Gastrocnemius medialis (tissue), 4 donors: ENCODE measurements at regions of chr21 and their contacts with region 1.

Region 1: DNA sequence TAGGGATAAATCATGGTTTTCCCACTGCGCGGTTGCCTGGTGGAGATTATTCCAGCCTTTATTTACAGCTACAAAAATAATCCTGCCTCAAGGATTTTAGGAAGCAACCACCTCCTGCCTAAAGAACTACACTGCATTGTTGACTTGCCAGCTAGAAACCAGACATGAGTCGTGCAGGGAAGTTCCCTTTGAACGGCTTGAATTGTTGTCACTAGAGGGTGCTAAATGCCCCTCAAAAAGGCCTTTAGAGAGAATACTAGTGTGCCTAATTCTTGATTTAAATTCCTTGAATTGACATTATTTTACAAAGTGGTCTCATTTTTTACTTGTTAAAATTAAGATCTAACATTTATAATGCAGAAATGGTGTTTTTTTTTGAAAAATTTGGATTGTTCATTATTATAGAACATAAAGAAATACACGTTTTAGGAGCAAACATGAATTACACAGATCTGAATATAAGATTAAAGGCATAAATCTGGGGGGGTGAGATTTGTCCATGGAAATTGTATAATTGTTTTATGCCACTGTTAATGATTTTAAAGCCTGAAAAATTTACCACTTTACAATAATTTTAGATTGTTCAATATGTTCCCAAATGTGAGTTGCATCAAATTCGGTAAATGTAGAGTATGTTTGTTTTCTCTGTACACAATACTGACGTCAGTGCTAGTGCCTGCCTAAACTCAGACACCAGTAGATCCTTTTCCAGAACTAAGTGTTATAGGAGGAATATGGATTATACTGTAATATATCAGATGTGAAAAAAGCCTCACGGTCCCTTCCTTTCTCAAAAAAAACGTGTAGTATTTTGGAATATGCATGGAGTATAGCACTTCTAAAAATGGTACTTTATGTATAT is 7.6 kb upstream of the ERG start:
- DNase-seq: no peak
- ATAC-seq: peak; percentile 51 to 85
- H3K4me3 ChIP-seq: peak overlapping the region in 2 of 4 donors; percentile 18 to 39
- H3K27ac ChIP-seq: peak overlapping the region in 3 of 4 donors; percentile 68 to 70 (median 68)
- H3K4me1 ChIP-seq: no peaks in the 10 kb centered on the region
- H3K27me3 ChIP-seq: no peaks in the 10 kb centered on the region
- CTCF ChIP-seq: peak in 4 of 5 experiments; percentile 13 to 54 (median 35)
- POLR2A ChIP-seq: no peak

Region 2: DNA sequence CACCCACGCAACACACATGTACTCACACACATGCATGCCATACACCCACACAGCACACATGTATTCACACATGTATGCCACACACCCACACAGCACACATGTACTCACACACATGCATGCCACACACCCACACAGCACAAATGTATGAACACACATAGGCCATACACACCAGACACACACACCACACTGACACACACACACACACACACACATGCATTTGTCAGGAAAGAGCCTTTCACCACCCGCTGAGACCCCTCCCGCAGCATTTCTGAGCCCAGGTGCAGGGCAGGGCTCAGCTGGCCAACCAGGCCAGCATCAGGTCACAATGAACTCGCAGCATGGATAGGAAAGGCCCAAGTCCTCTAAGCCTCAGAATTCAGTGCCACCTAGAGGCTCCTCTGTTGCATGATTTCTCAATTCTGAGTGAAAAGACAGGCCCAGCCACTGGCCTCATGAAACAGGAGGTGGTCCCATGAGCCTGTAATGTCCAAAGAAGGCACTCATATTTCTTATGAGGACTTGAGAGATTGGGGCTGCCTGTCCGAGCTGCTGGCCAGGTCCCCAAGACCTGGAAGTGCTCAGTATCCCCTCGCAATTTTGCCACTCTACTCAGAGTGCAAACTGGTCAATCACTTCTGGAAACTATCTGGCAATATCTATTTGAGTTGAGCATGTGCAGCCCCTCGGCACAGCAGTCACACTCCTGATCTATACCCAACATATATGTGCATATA is 620.0 kb after region 1 on chr21:
- in situ Hi-C with region 1: loop called in 3 of 4 experiments (anchors 25 kb)
- intact Hi-C with region 1: no loop called
- DNase-seq: peak in 1 of 2 donors; percentile 46
- ATAC-seq: peak; percentile 91 to 99
- H3K4me3 ChIP-seq: no peak overlapping the region
- H3K27ac ChIP-seq: peak overlapping the region in 2 of 4 donors; percentile 9 to 39
- H3K4me1 ChIP-seq: peaks cover 6 to 9% of the 10 kb centered on the region in 2 donors
- H3K27me3 ChIP-seq: no peaks in the 10 kb centered on the region
- CTCF ChIP-seq: peak; percentile 54 to 67 (median 65)
- POLR2A ChIP-seq: no peak

Region 3: GRCh38 chr21:39137248-39138178 is 631.6 kb after region 1 on chr21:
- in situ Hi-C with region 1: loop called (anchors 10 to 25 kb)
- intact Hi-C with region 1: no loop called
- DNase-seq: no peak
- ATAC-seq: no peak
- H3K4me3 ChIP-seq: no peak overlapping the region
- H3K27ac ChIP-seq: no peak overlapping the region
- H3K4me1 ChIP-seq: no peaks in the 10 kb centered on the region
- H3K27me3 ChIP-seq: no peaks in the 10 kb centered on the region
- CTCF ChIP-seq: no peak
- POLR2A ChIP-seq: no peak